ENCODE measurements at regions of chr1 and their contacts with region 1.

Region 1: GRCh38 chr1:175023043-175023921 is at the start of gene MRPS14:
- DNase-seq: peak; percentile 99
- ATAC-seq: peak; percentile 93
- H3K4me3 Mint-ChIP-seq: peak within 1 kb of the TSS; percentile 93
- H3K27ac Mint-ChIP-seq: peak within 1 kb of the TSS; percentile 92
- H3K4me1 Mint-ChIP-seq: peaks cover 36% of the 10 kb centered on the region
- H3K27me3 Mint-ChIP-seq: no peaks in the 10 kb centered on the region
- total RNA-seq, gene MRPS14: 30.2 to 33.7 TPM

Region 2: DNA sequence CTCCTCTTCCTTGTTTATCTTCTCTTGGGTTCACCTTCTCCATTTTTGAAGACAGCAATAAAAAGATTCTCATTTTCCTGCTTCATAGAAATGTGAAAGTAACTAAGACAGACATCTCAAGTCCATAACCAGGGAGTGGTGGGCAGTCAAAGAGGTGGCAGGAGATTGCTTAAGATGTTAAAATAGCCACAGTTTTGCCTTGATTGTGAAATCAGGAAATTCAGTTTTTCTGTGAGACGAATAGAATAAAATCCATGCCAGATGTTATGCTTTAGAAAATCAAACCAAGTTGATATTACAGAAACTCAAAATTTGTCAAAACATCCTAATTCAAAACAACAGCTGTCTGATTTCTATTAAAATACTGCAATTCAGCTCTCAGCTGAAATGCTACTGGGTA is 101.6 kb after region 1 on chr1:
- CTCF ChIA-PET with region 1: interaction called, 102 read pairs
- POLR2A ChIA-PET with region 1: no interaction called
- DNase-seq: no peak
- ATAC-seq: no peak
- H3K4me3 Mint-ChIP-seq: no peak overlapping the region
- H3K27ac Mint-ChIP-seq: no peak overlapping the region
- H3K4me1 Mint-ChIP-seq: no peaks in the 10 kb centered on the region
- H3K27me3 Mint-ChIP-seq: no peaks in the 10 kb centered on the region

Region 3: DNA sequence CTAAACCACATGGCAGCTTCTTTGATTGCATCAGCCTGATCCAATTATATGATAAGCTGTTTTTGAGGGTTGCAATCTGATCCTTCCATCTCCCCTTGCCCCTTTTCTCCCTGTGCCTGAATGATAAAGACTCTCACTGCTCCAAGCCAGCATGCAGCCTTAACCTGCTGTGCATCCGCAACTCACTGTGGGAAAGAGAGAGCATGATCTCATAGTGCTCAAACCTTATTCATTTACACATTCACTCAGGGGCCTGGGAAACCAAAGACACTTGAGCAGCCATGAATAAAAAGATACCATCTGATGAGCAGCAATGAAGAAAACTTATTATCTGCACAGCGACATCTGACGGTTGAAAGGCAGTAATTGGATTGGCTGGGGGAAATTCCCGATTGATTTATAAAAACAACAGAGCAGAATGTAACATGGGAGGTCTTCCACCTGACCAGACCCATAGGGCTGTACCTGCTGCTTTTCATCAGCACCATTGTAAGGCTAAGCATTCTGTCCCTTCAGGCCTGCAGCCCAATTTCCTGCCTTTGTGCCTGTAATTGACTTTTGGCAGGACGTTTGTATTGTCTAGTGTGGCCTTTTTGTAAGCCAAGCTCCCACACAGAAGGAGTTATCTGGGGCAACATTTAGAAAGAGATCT is 106.8 kb after region 1 on chr1:
- CTCF ChIA-PET with region 1: interaction called, 102 read pairs
- POLR2A ChIA-PET with region 1: no interaction called
- DNase-seq: no peak
- ATAC-seq: no peak
- H3K4me3 Mint-ChIP-seq: no peak overlapping the region
- H3K27ac Mint-ChIP-seq: no peak overlapping the region
- H3K4me1 Mint-ChIP-seq: no peaks in the 10 kb centered on the region
- H3K27me3 Mint-ChIP-seq: peaks cover 15% of the 10 kb centered on the region

Measured in activated CD8-positive, alpha-beta T cell treated with anti-CD3 and anti-CD28 coated beads, Interleukin-2, amount 10 ng/mL, durations not matched to agents 7 days and 5 days (primary cell).